ENCODE measurements at regions of chr11 and their contacts with region 1.

Region 1: DNA sequence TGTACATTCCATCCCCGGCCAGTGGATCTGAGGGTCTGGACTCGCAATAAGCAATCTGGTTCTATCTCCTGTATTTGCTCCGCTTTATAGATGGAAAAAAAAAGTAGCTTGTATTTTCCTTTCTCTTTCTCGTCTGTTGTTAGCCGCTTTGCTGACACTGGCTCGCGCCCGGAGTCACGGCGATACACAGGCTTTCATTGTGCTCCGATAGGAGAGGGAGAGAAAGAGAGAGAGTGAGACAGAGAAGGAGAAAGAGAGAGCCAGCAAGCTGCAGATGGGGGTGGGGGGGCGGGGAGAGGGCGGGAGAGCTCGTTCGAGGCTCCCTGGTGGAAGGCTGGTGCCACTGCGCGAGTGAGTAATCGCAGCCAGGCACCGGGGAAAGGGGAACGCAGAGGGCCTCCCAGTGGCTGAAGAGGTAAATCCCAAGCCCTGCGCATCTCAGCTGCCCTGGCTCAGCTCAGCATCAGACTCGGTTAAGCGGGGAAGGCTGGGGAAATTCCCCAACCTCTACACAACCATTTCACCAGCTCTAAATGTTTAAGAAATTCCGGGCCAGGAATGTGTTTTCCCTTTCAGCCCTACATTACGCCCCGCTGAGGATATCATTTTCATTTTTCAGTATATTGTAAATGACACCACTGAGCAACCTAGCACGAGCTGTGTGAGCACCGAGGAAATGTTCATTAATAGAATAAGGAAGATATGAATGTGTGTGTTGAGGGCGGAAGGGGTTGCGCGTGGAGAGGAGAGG is at the start of gene MAML2:
- DNase-seq: peak; percentile 79
- ATAC-seq: peak; percentile 99
- H3K4me3 ChIP-seq: peak within 1 kb of the TSS; percentile 59 to 69
- H3K27ac ChIP-seq: no peak within 1 kb of the TSS
- H3K4me1 ChIP-seq: peaks cover 4 to 20% of the 10 kb centered on the region in 2 experiments; a peak in 3 of 4 replicates
- H3K27me3 ChIP-seq: no peaks in the 10 kb centered on the region
- CTCF ChIP-seq: peak; percentile 62 to 94 (median 82)
- POLR2A ChIP-seq: no peak
- RAD21 ChIP-seq: peak; percentile 88
- total RNA-seq, gene MAML2: 2.6 TPM

Region 2: DNA sequence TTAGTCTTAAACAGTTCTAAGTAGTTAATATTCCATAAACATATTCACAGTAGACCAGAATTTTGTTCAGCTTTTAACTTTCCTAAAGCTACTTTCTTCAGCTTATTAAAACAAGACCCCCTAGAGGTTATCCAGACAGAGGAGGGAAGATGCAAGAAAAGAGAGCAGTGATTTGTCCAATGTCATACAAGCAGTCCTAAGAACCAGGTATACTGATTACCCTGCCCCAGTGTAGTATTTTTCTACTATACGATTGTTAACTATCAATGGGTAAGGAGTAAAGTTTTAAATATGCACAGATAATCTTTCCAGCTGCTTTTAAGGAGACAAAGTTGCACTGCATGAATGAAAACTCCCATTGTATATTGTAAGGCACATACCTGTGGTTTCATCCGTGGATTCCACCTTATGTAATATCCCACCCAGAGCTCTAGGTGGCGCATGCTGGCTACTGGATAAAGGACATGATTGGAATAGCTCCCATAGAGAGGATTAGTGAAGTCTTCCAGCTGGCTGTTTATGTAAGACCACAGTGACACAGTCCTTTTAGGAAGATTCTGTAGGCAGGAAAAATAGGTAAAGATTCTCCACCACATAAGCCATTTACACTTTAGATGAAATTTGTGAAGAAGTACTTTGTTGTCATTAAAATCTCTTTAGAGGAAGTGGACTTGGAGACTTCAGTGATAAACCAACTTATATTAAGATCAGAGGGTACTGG is 507.2 kb before region 1 on chr11:
- CTCF ChIA-PET with region 1: interaction called, 18 read pairs
- POLR2A ChIA-PET with region 1: no interaction called
- RAD21 ChIA-PET with region 1: interaction called in 1 of 2 experiments, 6 read pairs
- intact Hi-C with region 1: no loop called
- DNase-seq: peak; percentile 63
- ATAC-seq: peak; percentile 99
- H3K4me3 ChIP-seq: no peak overlapping the region
- H3K27ac ChIP-seq: no peak overlapping the region
- H3K4me1 ChIP-seq: no peaks in the 10 kb centered on the region
- H3K27me3 ChIP-seq: no peaks in the 10 kb centered on the region
- CTCF ChIP-seq: peak; percentile 66 to 96 (median 83); a peak in 5 of 6 replicates
- POLR2A ChIP-seq: no peak
- RAD21 ChIP-seq: peak; percentile 76

Region 3: GRCh38 chr11:96054870-96055705 is 288.0 kb before region 1 on chr11:
- CTCF ChIA-PET with region 1: interaction called, 65 read pairs
- POLR2A ChIA-PET with region 1: interaction called, 4 read pairs
- RAD21 ChIA-PET with region 1: interaction called, 9 to 10 read pairs
- intact Hi-C with region 1: loop called (anchors 1 kb)
- DNase-seq: peak; percentile 27
- ATAC-seq: peak; percentile 60; the same call in 1 of the 2 replicates
- H3K4me3 ChIP-seq: no peak overlapping the region
- H3K27ac ChIP-seq: no peak overlapping the region
- H3K4me1 ChIP-seq: peaks cover 0 to 14% of the 10 kb centered on the region in 2 experiments; a peak in 3 of 4 replicates
- H3K27me3 ChIP-seq: no peaks in the 10 kb centered on the region
- CTCF ChIP-seq: peak; percentile 53 to 83 (median 65)
- POLR2A ChIP-seq: no peak
- RAD21 ChIP-seq: peak; percentile 78

Region 4: GRCh38 chr11:96155627-96156378 is 187.3 kb before region 1 on chr11:
- CTCF ChIA-PET with region 1: interaction called, 10 read pairs
- POLR2A ChIA-PET with region 1: interaction called, 4 read pairs
- RAD21 ChIA-PET with region 1: no interaction called
- intact Hi-C with region 1: no loop called
- DNase-seq: peak; percentile 27
- ATAC-seq: peak; percentile 72
- H3K4me3 ChIP-seq: peak overlapping the region in 1 of 2 experiments; percentile 9; a peak in 2 of 4 replicates
- H3K27ac ChIP-seq: peak overlapping the region; percentile 7; the same call in 1 of the 2 replicates
- H3K4me1 ChIP-seq: peaks cover 12 to 24% of the 10 kb centered on the region in 2 experiments; a peak in 3 of 4 replicates
- H3K27me3 ChIP-seq: no peaks in the 10 kb centered on the region
- CTCF ChIP-seq: peak in 2 of 3 experiments; percentile 23 to 42; a peak in 3 of 6 replicates
- POLR2A ChIP-seq: no peak
- RAD21 ChIP-seq: 0 out of 2 replicates have a peak, but pooled peaks have one; percentile 22

Region 5: GRCh38 chr11:96306933-96307775 is 36.0 kb before region 1 on chr11:
- CTCF ChIA-PET with region 1: interaction called, 18 read pairs
- POLR2A ChIA-PET with region 1: interaction called, 4 read pairs
- RAD21 ChIA-PET with region 1: interaction called in 1 of 2 experiments, 7 read pairs
- intact Hi-C with region 1: no loop called
- DNase-seq: peak; percentile 95
- ATAC-seq: peak; percentile 74
- H3K4me3 ChIP-seq: peak overlapping the region; percentile 24 to 46
- H3K27ac ChIP-seq: peak overlapping the region; percentile 90
- H3K4me1 ChIP-seq: peaks cover 55 to 89% of the 10 kb centered on the region in 2 experiments
- H3K27me3 ChIP-seq: no peaks in the 10 kb centered on the region
- CTCF ChIP-seq: no peak
- POLR2A ChIP-seq: no peak
- RAD21 ChIP-seq: peak; percentile 6; the same call in 1 of the 2 replicates